A549 (cell line): ENCODE measurements at regions of chr19 and their contacts with region 1.

Region 1: GRCh38 chr19:42634409-42635232 is 39.9 kb upstream of the CEACAM8 start:
- DNase-seq: peak; percentile 71 to 73
- ATAC-seq: peak; percentile 68 to 92
- H3K4me3 ChIP-seq: no peak overlapping the region
- H3K27ac ChIP-seq: no peak overlapping the region
- H3K4me1 ChIP-seq: no peaks in the 10 kb centered on the region
- CTCF ChIP-seq: peak; percentile 88
- EP300 ChIP-seq: no peak
- POLR2A ChIP-seq: no peak
- RAD21 ChIP-seq: peak; percentile 79 to 94

Region 2: GRCh38 chr19:42514449-42514848 is 120.2 kb before region 1 on chr19:
- CTCF ChIA-PET with region 1: no interaction called
- POLR2A ChIA-PET with region 1: no interaction called
- DNase-seq: no peak
- ATAC-seq: no peak
- H3K4me3 ChIP-seq: no peak overlapping the region
- H3K27ac ChIP-seq: no peak overlapping the region
- H3K4me1 ChIP-seq: no peaks in the 10 kb centered on the region
- CTCF ChIP-seq: no peak
- EP300 ChIP-seq: no peak
- POLR2A ChIP-seq: no peak
- RAD21 ChIP-seq: no peak

Region 3: DNA sequence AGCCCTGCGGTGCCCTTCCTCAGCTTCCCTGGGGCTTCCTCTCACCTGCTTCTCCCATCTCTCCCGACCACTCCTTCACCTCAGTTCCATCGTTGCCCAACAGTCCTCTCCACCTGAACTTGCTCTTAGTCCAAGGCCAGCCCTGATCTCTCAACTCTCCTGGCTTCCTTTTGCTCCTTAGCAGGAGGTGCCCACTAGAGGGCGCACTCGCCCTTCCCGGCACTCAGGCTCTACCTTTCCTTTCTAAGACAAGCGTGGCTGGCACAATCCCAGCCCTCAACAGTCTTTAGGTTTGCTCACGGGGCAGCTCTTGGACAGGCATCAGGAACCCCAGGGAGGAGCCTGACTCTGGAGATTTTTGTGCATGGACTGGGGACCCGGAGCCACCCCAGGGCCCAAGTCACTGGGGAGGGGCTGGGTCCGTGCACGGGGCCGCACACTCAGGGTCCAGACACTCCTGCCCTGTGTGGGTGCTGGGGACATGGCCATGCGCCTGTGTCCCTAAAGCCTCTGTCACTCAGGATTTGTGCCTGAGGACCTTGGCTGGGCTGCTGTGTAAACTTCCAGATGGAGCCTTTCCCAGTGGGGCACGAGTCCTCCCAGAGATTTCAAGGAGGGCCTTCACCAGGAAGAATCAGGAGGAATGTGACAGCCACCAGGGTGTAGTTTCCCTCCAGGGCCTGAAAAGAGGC is 27.8 kb before region 1 on chr19:
- CTCF ChIA-PET with region 1: interaction called, 24 read pairs
- POLR2A ChIA-PET with region 1: no interaction called
- DNase-seq: peak; percentile 80 to 88
- ATAC-seq: peak; percentile 75 to 98
- H3K4me3 ChIP-seq: no peak overlapping the region
- H3K27ac ChIP-seq: no peak overlapping the region
- H3K4me1 ChIP-seq: no peaks in the 10 kb centered on the region
- CTCF ChIP-seq: peak; percentile 87
- EP300 ChIP-seq: no peak
- POLR2A ChIP-seq: peak; percentile 22; the same call in 1 of the 2 replicates
- RAD21 ChIP-seq: peak; percentile 75 to 86

Region 4: DNA sequence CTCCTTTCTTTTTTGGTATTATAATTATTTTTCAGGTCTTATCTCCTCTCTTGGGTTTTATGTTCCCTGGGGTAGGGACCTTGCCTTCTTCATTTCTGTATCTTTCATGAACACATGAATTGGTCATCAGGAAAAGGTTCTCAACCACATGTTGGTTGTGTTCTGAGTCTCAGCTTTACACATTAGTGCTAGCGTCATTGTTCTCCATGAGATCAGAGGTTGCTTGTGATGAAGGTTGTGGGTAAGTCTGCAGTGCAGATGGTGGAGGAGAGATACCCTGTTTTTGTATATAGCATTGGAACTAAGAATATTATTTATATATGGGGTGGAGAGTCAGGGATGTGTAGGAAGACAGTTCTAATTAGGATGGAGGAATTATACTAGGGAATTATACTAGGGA is 15.3 kb before region 1 on chr19:
- CTCF ChIA-PET with region 1: interaction called, 18 read pairs
- POLR2A ChIA-PET with region 1: no interaction called
- DNase-seq: no peak
- ATAC-seq: no peak
- H3K4me3 ChIP-seq: no peak overlapping the region
- H3K27ac ChIP-seq: no peak overlapping the region
- H3K4me1 ChIP-seq: no peaks in the 10 kb centered on the region
- CTCF ChIP-seq: no peak
- EP300 ChIP-seq: no peak
- POLR2A ChIP-seq: no peak
- RAD21 ChIP-seq: no peak

Region 5: GRCh38 chr19:42652021-42652420 is 17.4 kb after region 1 on chr19:
- CTCF ChIA-PET with region 1: interaction called, 32 read pairs
- POLR2A ChIA-PET with region 1: no interaction called
- DNase-seq: no peak
- ATAC-seq: no peak
- H3K4me3 ChIP-seq: no peak overlapping the region
- H3K27ac ChIP-seq: no peak overlapping the region
- H3K4me1 ChIP-seq: no peaks in the 10 kb centered on the region
- CTCF ChIP-seq: no peak
- EP300 ChIP-seq: no peak
- POLR2A ChIP-seq: no peak
- RAD21 ChIP-seq: no peak

Region 6: DNA sequence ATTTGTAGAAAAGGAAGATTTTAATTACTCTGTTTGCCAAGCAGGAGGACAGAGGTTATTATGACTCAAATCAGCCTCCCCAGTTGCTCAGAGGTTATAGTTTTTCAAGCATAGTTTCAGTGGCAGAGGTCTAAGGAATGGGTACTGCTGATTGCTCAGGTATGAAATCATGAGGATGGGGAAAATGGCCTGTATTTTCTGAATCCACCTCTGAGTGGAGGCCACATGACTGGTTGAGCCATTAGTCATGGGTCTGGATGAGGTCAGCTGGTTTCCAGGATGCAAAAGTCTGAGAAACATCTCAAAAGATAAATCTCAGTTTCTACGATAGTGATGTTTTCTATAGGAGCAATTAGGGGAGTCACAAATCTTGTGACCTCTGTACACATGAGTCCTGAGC is 22.9 kb after region 1 on chr19:
- CTCF ChIA-PET with region 1: interaction called, 32 read pairs
- POLR2A ChIA-PET with region 1: no interaction called
- DNase-seq: no peak
- ATAC-seq: no peak
- H3K4me3 ChIP-seq: no peak overlapping the region
- H3K27ac ChIP-seq: no peak overlapping the region
- H3K4me1 ChIP-seq: no peaks in the 10 kb centered on the region
- CTCF ChIP-seq: no peak
- EP300 ChIP-seq: no peak
- POLR2A ChIP-seq: no peak
- RAD21 ChIP-seq: no peak

Region 7: GRCh38 chr19:42662712-42663111 is 28.1 kb after region 1 on chr19:
- CTCF ChIA-PET with region 1: interaction called, 14 read pairs
- POLR2A ChIA-PET with region 1: no interaction called
- DNase-seq: no peak
- ATAC-seq: peak in 1 of 2 experiments; percentile 53; a peak in 3 of 6 replicates
- H3K4me3 ChIP-seq: no peak overlapping the region
- H3K27ac ChIP-seq: no peak overlapping the region
- H3K4me1 ChIP-seq: no peaks in the 10 kb centered on the region
- CTCF ChIP-seq: no peak
- EP300 ChIP-seq: no peak
- POLR2A ChIP-seq: no peak
- RAD21 ChIP-seq: no peak

Region 8: GRCh38 chr19:42693764-42694350 is 59.2 kb after region 1 on chr19:
- CTCF ChIA-PET with region 1: interaction called, 19 read pairs
- POLR2A ChIA-PET with region 1: no interaction called
- DNase-seq: peak; percentile 85 to 98
- ATAC-seq: peak; percentile 97 to 99
- H3K4me3 ChIP-seq: no peak overlapping the region
- H3K27ac ChIP-seq: no peak overlapping the region
- H3K4me1 ChIP-seq: no peaks in the 10 kb centered on the region
- CTCF ChIP-seq: peak; percentile 99
- EP300 ChIP-seq: no peak
- POLR2A ChIP-seq: no peak
- RAD21 ChIP-seq: peak; percentile 97 to 99